Activated CD4-positive, alpha-beta memory T cell treated with anti-CD3 and anti-CD28 coated beads for 36 hours (primary cell): ENCODE measurements at regions of chr10 and their contacts with region 1.

Region 1: GRCh38 chr10:22022257-22023032 is 18.9 kb upstream of the DNAJC1 start:
- DNase-seq: peak; percentile 78
- H3K4me3 Mint-ChIP-seq: peak overlapping the region; percentile 57
- H3K27ac Mint-ChIP-seq: peak overlapping the region; percentile 80
- H3K4me1 Mint-ChIP-seq: peaks cover 21% of the 10 kb centered on the region
- H3K27me3 Mint-ChIP-seq: no peaks in the 10 kb centered on the region

Region 2: GRCh38 chr10:22097696-22098095 is 75.3 kb after region 1 on chr10:
- CTCF ChIA-PET with region 1: no interaction called
- POLR2A ChIA-PET with region 1: no interaction called
- intact Hi-C with region 1: no loop called
- DNase-seq: no peak
- H3K4me3 Mint-ChIP-seq: no peak overlapping the region
- H3K27ac Mint-ChIP-seq: no peak overlapping the region
- H3K4me1 Mint-ChIP-seq: no peaks in the 10 kb centered on the region
- H3K27me3 Mint-ChIP-seq: no peaks in the 10 kb centered on the region

Region 3: DNA sequence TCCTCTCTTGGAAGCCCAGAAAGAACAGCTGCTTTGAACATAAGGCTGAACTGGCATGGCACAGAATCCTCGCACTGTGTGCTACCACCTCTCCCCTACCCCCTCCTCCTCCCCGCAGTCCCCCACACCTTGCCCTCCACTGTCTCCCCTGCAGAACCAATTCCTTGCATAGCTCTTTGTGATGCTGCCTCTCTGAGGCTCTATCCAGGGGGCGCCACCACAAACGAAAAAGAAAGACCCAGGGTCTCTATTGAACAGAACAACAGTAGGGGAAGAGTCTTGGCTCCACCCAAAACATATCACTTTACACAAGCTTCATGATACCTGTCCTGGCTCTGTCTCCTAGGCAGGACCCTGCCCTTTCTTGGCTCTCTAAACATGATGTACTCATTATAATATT is 221.6 kb after region 1 on chr10:
- CTCF ChIA-PET with region 1: no interaction called
- POLR2A ChIA-PET with region 1: no interaction called
- intact Hi-C with region 1: loop called (anchors 5 kb)
- DNase-seq: peak; percentile 17
- H3K4me3 Mint-ChIP-seq: no peak overlapping the region
- H3K27ac Mint-ChIP-seq: no peak overlapping the region
- H3K4me1 Mint-ChIP-seq: peaks cover 39% of the 10 kb centered on the region
- H3K27me3 Mint-ChIP-seq: peaks cover 4% of the 10 kb centered on the region